Mammary epithelial cell (primary cell): ENCODE measurements at regions of chr6 and their contacts with region 1.

Region 1: DNA sequence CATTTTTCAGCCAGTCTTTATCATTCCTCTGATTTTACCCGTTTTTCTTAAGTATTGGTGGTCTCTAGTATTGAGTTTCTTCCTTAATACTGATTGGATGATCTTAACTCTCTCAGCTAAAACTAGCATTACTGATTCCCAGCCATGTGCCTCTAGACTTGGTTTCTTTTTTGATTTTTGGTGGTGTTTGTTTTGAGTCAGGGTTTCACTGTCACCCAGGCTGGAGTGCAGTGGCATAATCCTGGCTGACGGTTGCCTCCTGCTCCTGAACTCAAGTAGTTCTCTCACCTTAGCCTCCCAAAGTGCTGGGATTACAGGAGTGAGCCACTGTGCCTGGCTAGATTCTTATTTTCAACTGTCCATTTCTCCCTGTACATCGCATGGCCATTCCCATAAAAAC is 24.9 kb downstream of the DPPA5 start:
- DNase-seq: no peak
- H3K4me3 ChIP-seq: no peak overlapping the region
- H3K27ac ChIP-seq: no peak overlapping the region
- H3K4me1 ChIP-seq: no peaks in the 10 kb centered on the region
- H3K27me3 ChIP-seq: peaks cover 2% of the 10 kb centered on the region
- CTCF ChIP-seq: no peak

Region 2: DNA sequence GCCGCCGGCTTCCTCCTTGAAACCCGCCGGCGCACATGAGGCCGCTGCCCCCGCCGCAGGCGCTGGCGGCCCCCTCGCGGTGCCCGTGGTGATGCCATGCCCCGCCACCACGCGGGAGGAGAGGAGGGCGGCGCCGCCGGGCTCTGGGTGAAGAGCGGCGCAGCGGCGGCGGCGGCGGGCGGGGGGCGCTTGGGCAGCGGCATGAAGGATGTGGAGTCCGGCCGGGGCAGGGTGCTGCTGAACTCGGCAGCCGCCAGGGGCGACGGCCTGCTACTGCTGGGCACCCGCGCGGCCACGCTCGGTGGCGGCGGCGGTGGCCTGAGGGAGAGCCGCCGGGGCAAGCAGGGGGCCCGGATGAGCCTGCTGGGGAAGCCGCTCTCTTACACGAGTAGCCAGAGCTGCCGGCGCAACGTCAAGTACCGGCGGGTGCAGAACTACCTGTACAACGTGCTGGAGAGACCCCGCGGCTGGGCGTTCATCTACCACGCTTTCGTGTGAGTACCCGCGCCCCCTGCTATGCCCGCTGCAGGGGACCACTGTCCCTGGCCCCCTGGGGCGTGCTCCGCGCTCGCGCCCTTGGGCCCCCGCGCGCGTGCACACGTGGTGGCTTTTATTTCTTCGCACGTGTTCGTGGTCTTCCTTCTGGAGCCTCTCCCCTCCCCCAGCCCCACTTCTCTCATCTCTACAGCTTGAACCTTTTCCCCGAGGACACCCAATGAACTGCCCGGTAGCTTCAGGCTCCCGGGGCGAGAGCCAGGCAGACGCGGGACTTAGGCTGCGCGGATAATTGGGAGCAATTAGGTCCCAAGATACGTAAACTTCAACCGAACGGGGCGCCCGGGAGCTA is 706.9 kb before region 1 on chr6:
- CTCF ChIA-PET with region 1: no interaction called
- dilution Hi-C with region 1: loop called (anchors 10 kb)
- in situ Hi-C with region 1: no loop called
- intact Hi-C with region 1: loop called (anchors 5 kb)
- DNase-seq: peak; percentile 46
- H3K4me3 ChIP-seq: peak overlapping the region; percentile 65 to 72 (median 72)
- H3K27ac ChIP-seq: peak overlapping the region; percentile 50
- H3K4me1 ChIP-seq: peaks cover 21% of the 10 kb centered on the region
- H3K27me3 ChIP-seq: no peaks in the 10 kb centered on the region
- CTCF ChIP-seq: peak in 1 of 2 donors; percentile 35

Region 3: GRCh38 chr6:73180763-73181619 is 148.2 kb before region 1 on chr6:
- CTCF ChIA-PET with region 1: no interaction called
- dilution Hi-C with region 1: no loop called
- in situ Hi-C with region 1: no loop called
- intact Hi-C with region 1: loop called (anchors 1 kb)
- DNase-seq: peak; percentile 59
- H3K4me3 ChIP-seq: no peak overlapping the region
- H3K27ac ChIP-seq: no peak overlapping the region
- H3K4me1 ChIP-seq: no peaks in the 10 kb centered on the region
- H3K27me3 ChIP-seq: no peaks in the 10 kb centered on the region
- CTCF ChIP-seq: peak; percentile 90 to 91

Region 4: DNA sequence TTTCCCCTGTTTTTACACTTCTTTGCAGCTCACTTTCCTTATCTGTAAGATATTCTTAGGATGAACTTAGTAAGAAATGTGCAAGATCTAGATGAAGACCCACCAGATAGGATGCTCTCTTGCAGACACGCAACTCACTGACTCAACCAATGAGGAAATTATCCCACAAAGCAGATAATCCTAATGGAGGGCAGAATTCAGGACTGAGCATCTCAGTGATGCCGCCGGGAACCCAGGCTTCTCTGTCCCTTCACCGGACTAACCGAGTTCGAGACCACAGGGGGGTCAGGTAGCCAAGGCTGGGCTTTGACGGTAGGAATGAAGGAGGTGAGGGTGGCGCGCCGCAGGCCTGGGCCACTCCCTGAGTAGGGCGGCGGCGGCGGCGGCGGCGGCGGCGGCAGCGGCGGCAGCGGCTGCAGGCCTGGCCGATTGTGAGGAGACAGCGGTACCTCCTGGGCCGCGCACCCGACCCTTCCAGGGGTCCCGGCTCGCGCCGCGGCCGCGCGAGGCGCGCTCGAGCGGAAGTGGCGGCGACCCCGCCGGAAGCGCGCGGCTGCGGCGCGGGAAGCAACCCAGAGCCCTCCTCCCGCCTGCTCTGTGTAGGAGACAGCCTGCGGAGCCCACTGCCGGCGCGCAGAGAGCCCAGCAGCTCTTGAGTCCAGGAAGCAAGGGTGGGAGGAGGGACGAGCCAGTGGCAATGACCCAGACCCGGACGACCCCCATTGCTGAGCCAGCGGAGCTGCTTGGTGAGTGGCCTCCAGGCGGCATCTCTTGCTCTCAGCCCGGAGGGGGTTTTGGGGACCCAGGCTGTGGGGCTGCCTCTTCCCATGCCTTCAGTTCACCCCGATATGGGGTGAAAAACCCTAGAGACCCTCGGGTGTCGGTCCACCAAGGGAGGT is 66.3 kb before region 1 on chr6 and contains the start of gene KHDC1:
- CTCF ChIA-PET with region 1: no interaction called
- dilution Hi-C with region 1: loop called (anchors 5 kb)
- in situ Hi-C with region 1: no loop called
- intact Hi-C with region 1: no loop called
- DNase-seq: peak; percentile 23
- H3K4me3 ChIP-seq: peak within 1 kb of the TSS; percentile 57 to 79 (median 70)
- H3K27ac ChIP-seq: peak within 1 kb of the TSS; percentile 52
- H3K4me1 ChIP-seq: peaks cover 37% of the 10 kb centered on the region
- H3K27me3 ChIP-seq: no peaks in the 10 kb centered on the region
- CTCF ChIP-seq: peak in 1 of 2 donors; percentile 7
- total RNA-seq, gene KHDC1: 0.71 to 1.2 TPM

Region 5: DNA sequence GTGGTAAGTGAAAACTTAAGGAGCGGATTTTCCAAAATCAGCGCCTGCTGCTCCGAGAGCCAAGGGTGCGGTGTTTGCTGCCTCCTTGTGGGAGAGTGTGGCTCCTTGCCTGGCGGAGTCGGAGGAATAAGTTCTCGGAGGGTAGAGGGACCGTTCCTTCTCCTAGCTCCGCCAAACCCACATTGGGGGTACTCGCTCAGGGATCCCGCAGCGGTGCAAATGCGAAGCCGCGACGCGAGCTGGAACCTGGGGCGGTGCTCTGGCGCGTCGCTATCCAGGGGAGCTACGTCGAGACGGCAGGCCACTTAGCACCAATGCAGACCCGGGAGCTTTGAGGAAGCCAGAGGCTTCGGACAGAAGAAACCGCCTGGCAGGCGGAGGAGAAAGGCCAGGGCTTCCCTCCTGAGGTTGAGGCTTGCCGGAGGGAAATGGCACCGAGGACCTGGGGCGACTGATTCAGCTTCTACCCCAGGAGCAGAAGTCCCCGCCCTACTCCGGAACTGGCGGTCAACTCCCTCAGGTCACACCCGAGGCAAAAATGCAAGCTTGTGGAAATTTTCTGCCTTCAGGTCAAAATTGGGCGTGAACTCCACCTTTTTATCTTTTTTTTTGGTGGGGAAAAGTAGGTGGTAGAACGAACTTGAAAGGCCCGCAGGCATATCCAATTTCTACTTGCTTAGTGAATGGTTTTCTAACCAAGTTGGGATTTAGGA is 59.8 kb after region 1 on chr6:
- CTCF ChIA-PET with region 1: interaction called, 6 read pairs
- dilution Hi-C with region 1: no loop called
- in situ Hi-C with region 1: no loop called
- intact Hi-C with region 1: loop called (anchors 5 kb)
- DNase-seq: peak; percentile 63
- H3K4me3 ChIP-seq: peak overlapping the region; percentile 32 to 58 (median 47)
- H3K27ac ChIP-seq: no peak overlapping the region
- H3K4me1 ChIP-seq: peaks cover 2% of the 10 kb centered on the region
- H3K27me3 ChIP-seq: no peaks in the 10 kb centered on the region
- CTCF ChIP-seq: peak; percentile 54 to 81